ENCODE measurements at regions of chr1 and their contacts with region 1.

Region 1: DNA sequence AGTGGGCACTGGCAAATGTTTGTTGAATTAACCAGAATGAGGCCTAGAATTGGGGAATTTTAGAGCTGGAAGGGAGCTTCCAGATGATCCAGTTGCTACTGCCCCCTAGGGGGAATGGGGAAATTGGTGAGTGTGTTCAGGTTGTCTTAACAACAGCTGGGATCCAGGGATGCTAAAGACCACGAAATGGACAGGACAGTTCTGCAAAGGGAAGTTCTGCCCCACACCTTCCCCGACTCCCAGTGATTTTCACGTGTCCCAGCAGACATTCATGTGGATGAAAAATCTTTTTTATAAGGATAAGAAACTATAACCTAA is 33.9 kb downstream of the TRIM62 start:
- DNase-seq: no peak
- CTCF ChIP-seq: peak; percentile 29

Region 2: GRCh38 chr1:33127001-33127791 is 20.8 kb before region 1 on chr1:
- CTCF ChIA-PET with region 1: interaction called, 19 read pairs
- POLR2A ChIA-PET with region 1: no interaction called
- DNase-seq: peak; percentile 94
- CTCF ChIP-seq: peak; percentile 97

Region 3: GRCh38 chr1:33137800-33138199 is 10.2 kb before region 1 on chr1:
- CTCF ChIA-PET with region 1: interaction called, 12 read pairs
- POLR2A ChIA-PET with region 1: no interaction called
- DNase-seq: no peak
- CTCF ChIP-seq: peak; percentile 43